Naive thymus-derived CD4-positive, alpha-beta T cell (primary cell): ENCODE measurements at regions of chr12 and their contacts with region 1.

Region 1: DNA sequence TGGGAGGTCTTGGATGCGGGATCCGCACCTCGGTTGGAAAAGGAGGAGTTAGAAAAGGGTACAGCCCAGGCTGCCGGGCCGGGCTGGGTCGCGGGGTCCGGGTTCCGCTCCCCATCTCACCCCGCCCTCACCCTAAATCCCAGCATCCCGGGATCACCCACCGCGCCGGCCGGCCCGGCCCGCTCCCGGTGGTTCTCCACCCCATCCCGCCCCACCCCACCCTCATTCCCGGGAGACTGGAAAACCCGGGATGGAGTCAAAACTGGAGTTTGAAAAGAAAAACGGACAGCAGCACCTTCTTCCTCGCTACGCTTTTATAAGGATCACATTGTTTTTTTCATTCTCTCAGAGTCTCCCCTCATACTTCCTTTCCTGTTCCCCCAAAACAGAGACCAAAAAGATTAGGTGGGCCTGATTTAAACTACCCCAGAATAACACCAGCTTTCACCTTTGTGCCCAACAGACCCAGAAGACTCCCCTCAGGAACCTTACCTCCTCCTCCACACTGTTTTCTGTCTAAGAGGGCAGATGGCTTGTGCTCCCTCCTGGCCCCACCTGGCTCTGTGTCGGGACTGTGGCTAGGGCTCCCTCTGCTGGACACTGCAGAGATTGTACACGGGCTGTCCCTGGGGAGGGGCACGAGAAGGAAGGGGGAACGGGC is 2.8 kb downstream of the GLI1 start:
- DNase-seq: peak; percentile 75 to 92 (median 86)
- ATAC-seq: peak; percentile 84
- H3K4me3 ChIP-seq: peak overlapping the region; percentile 56
- H3K4me3 Mint-ChIP-seq: peak overlapping the region; percentile 78 to 93 (median 88)
- H3K27ac ChIP-seq: no peak overlapping the region
- H3K27ac Mint-ChIP-seq: peak overlapping the region; percentile 56 to 91 (median 70)
- H3K4me1 ChIP-seq: peaks cover 21 to 30% of the 10 kb centered on the region in 2 donors
- H3K4me1 Mint-ChIP-seq: peaks cover 35 to 55% (median 42%) of the 10 kb centered on the region in 7 donors
- H3K27me3 ChIP-seq: no peaks in the 10 kb centered on the region
- H3K27me3 Mint-ChIP-seq: peaks cover 0 to 22% (median 8%) of the 10 kb centered on the region in 5 donors

Region 2: GRCh38 chr12:56152318-56153033 is 1309.9 kb before region 1 on chr12 and contains the start of gene MYL6B:
- CTCF ChIA-PET with region 1: no interaction called
- POLR2A ChIA-PET with region 1: no interaction called
- intact Hi-C with region 1: no loop called
- DNase-seq: peak; percentile 79 to 94 (median 87)
- ATAC-seq: peak; percentile 98
- H3K4me3 ChIP-seq: peak within 1 kb of the TSS; percentile 86
- H3K4me3 Mint-ChIP-seq: peak within 1 kb of the TSS; percentile 80 to 96 (median 92)
- H3K27ac ChIP-seq: peak within 1 kb of the TSS; percentile 80
- H3K27ac Mint-ChIP-seq: peak within 1 kb of the TSS; percentile 84 to 99 (median 97)
- H3K4me1 ChIP-seq: peaks cover 22 to 25% of the 10 kb centered on the region in 2 donors
- H3K4me1 Mint-ChIP-seq: peaks cover 17 to 55% (median 39%) of the 10 kb centered on the region in 7 donors
- H3K27me3 ChIP-seq: no peaks in the 10 kb centered on the region
- H3K27me3 Mint-ChIP-seq: no peaks in the 10 kb centered on the region
- total RNA-seq, gene MYL6B: 3.7 to 60.3 (median 8.9) TPM

Region 3: DNA sequence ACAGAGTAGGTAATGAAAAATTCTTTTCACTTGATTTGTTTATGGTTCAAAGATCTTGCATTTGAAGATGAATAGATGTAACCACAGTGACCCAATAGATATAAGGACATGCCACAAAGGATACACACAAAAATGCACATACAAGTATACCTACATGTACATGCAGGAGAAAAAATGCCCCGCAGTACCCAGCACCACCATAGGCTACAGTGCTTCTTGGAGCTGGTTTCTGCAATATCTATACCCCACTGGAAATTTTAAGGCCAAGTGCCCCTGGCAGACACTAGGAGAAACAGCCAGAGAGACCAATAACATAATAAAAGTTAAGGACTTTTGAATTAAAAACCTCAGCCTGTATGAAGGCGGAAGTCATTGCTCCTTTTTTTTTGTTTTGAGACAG is 199.3 kb before region 1 on chr12:
- CTCF ChIA-PET with region 1: no interaction called
- POLR2A ChIA-PET with region 1: no interaction called
- intact Hi-C with region 1: loop called (anchors 1 kb)
- DNase-seq: no peak
- ATAC-seq: no peak
- H3K4me3 ChIP-seq: no peak overlapping the region
- H3K4me3 Mint-ChIP-seq: no peak overlapping the region
- H3K27ac ChIP-seq: no peak overlapping the region
- H3K27ac Mint-ChIP-seq: no peak overlapping the region
- H3K4me1 ChIP-seq: no peaks in the 10 kb centered on the region
- H3K4me1 Mint-ChIP-seq: peaks cover 0 to 5% (median 0%) of the 10 kb centered on the region in 7 donors
- H3K27me3 ChIP-seq: no peaks in the 10 kb centered on the region
- H3K27me3 Mint-ChIP-seq: no peaks in the 10 kb centered on the region

Region 4: GRCh38 chr12:57419495-57419894 is 42.9 kb before region 1 on chr12:
- CTCF ChIA-PET with region 1: no interaction called
- POLR2A ChIA-PET with region 1: no interaction called
- intact Hi-C with region 1: no loop called
- DNase-seq: no peak
- ATAC-seq: no peak
- H3K4me3 ChIP-seq: no peak overlapping the region
- H3K4me3 Mint-ChIP-seq: peak overlapping the region in 1 of 10 donors; percentile 35
- H3K27ac ChIP-seq: no peak overlapping the region
- H3K27ac Mint-ChIP-seq: peak overlapping the region in 3 of 9 donors; percentile 32 to 51 (median 49)
- H3K4me1 ChIP-seq: peaks cover 0 to 11% of the 10 kb centered on the region in 2 donors
- H3K4me1 Mint-ChIP-seq: peaks cover 10 to 67% (median 61%) of the 10 kb centered on the region in 7 donors
- H3K27me3 ChIP-seq: no peaks in the 10 kb centered on the region
- H3K27me3 Mint-ChIP-seq: no peaks in the 10 kb centered on the region

Region 5: GRCh38 chr12:57476162-57476992 is 14.0 kb after region 1 on chr12:
- CTCF ChIA-PET with region 1: interaction called, 101 read pairs
- POLR2A ChIA-PET with region 1: interaction called, 81 read pairs
- intact Hi-C with region 1: loop called (anchors 1 kb)
- DNase-seq: peak; percentile 58 to 85 (median 70)
- ATAC-seq: peak; percentile 53
- H3K4me3 ChIP-seq: peak overlapping the region; percentile 95
- H3K4me3 Mint-ChIP-seq: peak overlapping the region; percentile 84 to 100 (median 98)
- H3K27ac ChIP-seq: peak overlapping the region; percentile 94
- H3K27ac Mint-ChIP-seq: peak overlapping the region; percentile 97 to 100 (median 100)
- H3K4me1 ChIP-seq: peaks cover 59 to 70% of the 10 kb centered on the region in 2 donors
- H3K4me1 Mint-ChIP-seq: peaks cover 66 to 85% (median 76%) of the 10 kb centered on the region in 7 donors
- H3K27me3 ChIP-seq: no peaks in the 10 kb centered on the region
- H3K27me3 Mint-ChIP-seq: no peaks in the 10 kb centered on the region

Region 6: DNA sequence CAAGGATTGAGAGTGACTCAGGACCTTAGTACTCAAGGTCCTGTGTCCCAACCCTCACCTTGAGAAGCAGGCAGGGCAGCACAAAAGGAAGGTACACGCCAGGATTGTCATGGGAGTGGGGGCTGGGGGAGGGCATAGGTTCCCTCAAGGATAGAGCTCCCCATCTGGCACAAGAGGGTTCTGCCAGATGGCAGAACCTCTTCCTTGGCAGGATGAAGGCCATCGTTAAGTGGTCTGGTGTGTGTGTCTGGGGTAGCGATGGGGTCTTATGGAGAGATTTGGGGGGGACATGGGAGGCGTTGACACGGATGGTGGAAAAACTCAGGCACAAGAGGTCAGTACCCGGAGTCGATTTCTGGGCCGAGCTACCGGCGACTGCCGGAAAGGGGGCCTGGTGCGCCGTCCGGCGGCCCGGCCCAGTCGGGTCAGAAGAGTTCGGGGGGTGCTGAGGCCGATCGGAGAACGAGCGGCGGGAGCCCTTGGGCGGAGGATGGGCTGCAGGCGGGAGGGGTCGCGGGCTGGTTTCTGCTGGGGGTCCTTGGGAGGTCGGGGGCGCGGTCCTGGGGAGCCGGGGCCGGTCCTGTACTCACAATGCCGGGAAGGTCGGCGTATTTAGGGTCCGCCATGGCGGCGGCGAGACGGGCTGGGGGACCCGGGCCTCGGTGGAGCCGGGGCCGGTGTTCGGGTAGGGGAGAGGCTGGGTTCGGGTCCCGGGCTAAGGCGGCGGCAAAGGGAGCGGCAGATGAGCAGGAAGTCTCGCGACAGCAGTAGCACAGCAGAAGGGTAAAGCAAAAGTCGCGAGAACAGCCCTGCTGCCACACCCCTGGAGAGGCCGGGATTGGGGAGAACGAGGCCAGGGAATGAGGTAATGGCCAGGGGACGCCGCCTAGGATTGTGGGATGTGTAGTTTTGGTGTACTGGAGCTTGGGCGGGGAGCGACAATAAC is 84.3 kb after region 1 on chr12 and contains the start of gene DCTN2:
- CTCF ChIA-PET with region 1: interaction called, 4 read pairs
- POLR2A ChIA-PET with region 1: interaction called, 3 read pairs
- intact Hi-C with region 1: loop called (anchors 1 kb)
- DNase-seq: peak; percentile 63 to 94 (median 88)
- ATAC-seq: peak; percentile 98
- H3K4me3 ChIP-seq: peak within 1 kb of the TSS; percentile 74
- H3K4me3 Mint-ChIP-seq: peak within 1 kb of the TSS; percentile 88 to 100 (median 98)
- H3K27ac ChIP-seq: peak within 1 kb of the TSS; percentile 88
- H3K27ac Mint-ChIP-seq: peak within 1 kb of the TSS; percentile 85 to 96 (median 92)
- H3K4me1 ChIP-seq: peaks cover 10 to 16% of the 10 kb centered on the region in 2 donors
- H3K4me1 Mint-ChIP-seq: peaks cover 28 to 64% (median 55%) of the 10 kb centered on the region in 7 donors
- H3K27me3 ChIP-seq: no peaks in the 10 kb centered on the region
- H3K27me3 Mint-ChIP-seq: peaks cover 0 to 28% (median 0%) of the 10 kb centered on the region in 5 donors
- total RNA-seq, gene DCTN2: 52.1 to 78.8 (median 63.0) TPM

Region 7: GRCh38 chr12:57632694-57633477 is 170.5 kb after region 1 on chr12 and contains the start of gene B4GALNT1:
- CTCF ChIA-PET with region 1: interaction called, 4 read pairs
- POLR2A ChIA-PET with region 1: interaction called, 3 read pairs
- intact Hi-C with region 1: loop called in 1 of 2 experiments (anchors 1 kb)
- DNase-seq: peak; percentile 33 to 74 (median 63)
- ATAC-seq: peak; percentile 96
- H3K4me3 ChIP-seq: peak within 1 kb of the TSS; percentile 57
- H3K4me3 Mint-ChIP-seq: peak within 1 kb of the TSS; percentile 51 to 83 (median 70)
- H3K27ac ChIP-seq: no peak within 1 kb of the TSS
- H3K27ac Mint-ChIP-seq: peak within 1 kb of the TSS in 3 of 9 donors; percentile 13 to 66 (median 46)
- H3K4me1 ChIP-seq: peaks cover 8% of the 10 kb centered on the region in 2 donors
- H3K4me1 Mint-ChIP-seq: peaks cover 0 to 14% (median 10%) of the 10 kb centered on the region in 7 donors
- H3K27me3 ChIP-seq: peaks cover 0 to 18% of the 10 kb centered on the region in 2 donors
- H3K27me3 Mint-ChIP-seq: peaks cover 34 to 69% (median 49%) of the 10 kb centered on the region in 5 donors
- total RNA-seq, gene B4GALNT1: 1.4 TPM in 1 of 5 experiments, not detected in the others

Region 8: DNA sequence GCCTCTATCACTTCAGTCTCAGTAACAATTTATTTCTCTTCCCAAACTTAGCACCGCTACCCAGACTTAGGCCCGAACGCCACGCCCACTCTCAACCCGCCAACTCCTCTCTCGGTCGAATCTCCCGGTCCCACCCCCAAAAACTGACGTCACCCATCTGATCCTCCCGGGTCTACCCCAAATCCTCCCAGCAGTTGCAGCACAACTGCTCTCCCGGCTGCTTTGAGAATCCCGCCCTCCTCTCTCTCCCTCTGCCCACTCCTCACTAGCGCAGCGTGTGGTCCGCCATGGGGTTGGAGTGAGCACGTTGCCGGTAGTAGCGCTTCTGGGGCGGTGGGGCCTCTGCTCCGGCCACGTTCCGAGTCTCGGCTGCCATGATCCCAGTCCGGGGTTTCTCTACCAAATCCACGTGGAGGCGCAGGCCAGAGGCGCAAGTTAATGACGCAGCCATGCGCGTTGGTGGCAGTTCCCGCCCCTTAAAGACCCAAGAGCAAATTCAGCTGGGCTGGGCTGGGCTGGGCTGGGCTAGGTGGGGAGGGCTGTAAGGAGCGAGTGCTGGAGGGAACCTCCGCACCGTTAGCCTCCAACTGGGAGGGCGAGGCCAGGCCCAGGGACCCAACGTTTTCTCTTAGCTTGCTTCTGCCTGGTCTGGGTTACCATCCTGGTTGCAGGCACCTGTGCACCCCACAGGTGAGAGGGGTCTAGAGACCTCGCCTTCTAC is 309.5 kb after region 1 on chr12 and contains the start of gene METTL1:
- CTCF ChIA-PET with region 1: no interaction called
- POLR2A ChIA-PET with region 1: no interaction called
- intact Hi-C with region 1: loop called in 1 of 2 experiments (anchors 1 kb)
- DNase-seq: peak; percentile 70 to 91 (median 86)
- ATAC-seq: peak; percentile 92
- H3K4me3 ChIP-seq: peak within 1 kb of the TSS; percentile 99
- H3K4me3 Mint-ChIP-seq: peak within 1 kb of the TSS; percentile 88 to 97 (median 94)
- H3K27ac ChIP-seq: peak within 1 kb of the TSS; percentile 90
- H3K27ac Mint-ChIP-seq: peak within 1 kb of the TSS; percentile 74 to 98 (median 97)
- H3K4me1 ChIP-seq: peaks cover 6 to 13% of the 10 kb centered on the region in 2 donors
- H3K4me1 Mint-ChIP-seq: peaks cover 21 to 35% (median 25%) of the 10 kb centered on the region in 7 donors
- H3K27me3 ChIP-seq: no peaks in the 10 kb centered on the region
- H3K27me3 Mint-ChIP-seq: peaks cover 0 to 3% (median 2%) of the 10 kb centered on the region in 5 donors
- total RNA-seq, gene METTL1: 11.8 to 30.9 (median 16.0) TPM